ENCODE measurements at regions of chr18 and their contacts with region 1.

Region 1: GRCh38 chr18:35267161-35267651 is 22.8 kb downstream of the ZSCAN30 start:
- DNase-seq: peak; percentile 52 to 67
- ATAC-seq: peak; percentile 87 to 92
- H3K4me3 ChIP-seq: peak overlapping the region; percentile 62 to 89 (median 73)
- H3K27ac ChIP-seq: peak overlapping the region; percentile 78 to 84 (median 82)
- H3K4me1 ChIP-seq: peaks cover 0 to 3% of the 10 kb centered on the region in 2 donors
- H3K27me3 ChIP-seq: no peaks in the 10 kb centered on the region
- CTCF ChIP-seq: peak in 1 of 5 experiments; percentile 5
- POLR2A ChIP-seq: peak; percentile 29 to 37

Region 2: GRCh38 chr18:35240664-35241447 is 26.4 kb before region 1 on chr18 and contains the start of gene ZNF397:
- in situ Hi-C with region 1: no loop called
- intact Hi-C with region 1: loop called (anchors 1 kb)
- DNase-seq: peak; percentile 96 to 97
- ATAC-seq: peak; percentile 99
- H3K4me3 ChIP-seq: peak within 1 kb of the TSS; percentile 79 to 95 (median 86)
- H3K27ac ChIP-seq: peak within 1 kb of the TSS; percentile 92 to 100 (median 96)
- H3K4me1 ChIP-seq: peaks cover 10 to 15% of the 10 kb centered on the region in 2 donors
- H3K27me3 ChIP-seq: no peaks in the 10 kb centered on the region
- CTCF ChIP-seq: peak in 1 of 5 experiments; percentile 16
- POLR2A ChIP-seq: peak; percentile 95 to 96
- total RNA-seq, gene ZNF397: 12.3 to 23.4 (median 14.7) TPM

Region 3: GRCh38 chr18:35290073-35290735 is 23.0 kb after region 1 on chr18 and contains the start of gene ZSCAN30:
- in situ Hi-C with region 1: no loop called
- intact Hi-C with region 1: loop called (anchors 1 kb)
- DNase-seq: peak; percentile 88 to 95
- ATAC-seq: peak; percentile 98
- H3K4me3 ChIP-seq: peak within 1 kb of the TSS; percentile 62 to 88 (median 80)
- H3K27ac ChIP-seq: peak within 1 kb of the TSS; percentile 88 to 92 (median 90)
- H3K4me1 ChIP-seq: peaks cover 21 to 30% of the 10 kb centered on the region in 2 donors
- H3K27me3 ChIP-seq: no peaks in the 10 kb centered on the region
- CTCF ChIP-seq: peak in 1 of 5 experiments; percentile 24
- POLR2A ChIP-seq: peak; percentile 51 to 60
- total RNA-seq, gene ZSCAN30: 4.6 to 34.6 (median 8.2) TPM

Region 4: DNA sequence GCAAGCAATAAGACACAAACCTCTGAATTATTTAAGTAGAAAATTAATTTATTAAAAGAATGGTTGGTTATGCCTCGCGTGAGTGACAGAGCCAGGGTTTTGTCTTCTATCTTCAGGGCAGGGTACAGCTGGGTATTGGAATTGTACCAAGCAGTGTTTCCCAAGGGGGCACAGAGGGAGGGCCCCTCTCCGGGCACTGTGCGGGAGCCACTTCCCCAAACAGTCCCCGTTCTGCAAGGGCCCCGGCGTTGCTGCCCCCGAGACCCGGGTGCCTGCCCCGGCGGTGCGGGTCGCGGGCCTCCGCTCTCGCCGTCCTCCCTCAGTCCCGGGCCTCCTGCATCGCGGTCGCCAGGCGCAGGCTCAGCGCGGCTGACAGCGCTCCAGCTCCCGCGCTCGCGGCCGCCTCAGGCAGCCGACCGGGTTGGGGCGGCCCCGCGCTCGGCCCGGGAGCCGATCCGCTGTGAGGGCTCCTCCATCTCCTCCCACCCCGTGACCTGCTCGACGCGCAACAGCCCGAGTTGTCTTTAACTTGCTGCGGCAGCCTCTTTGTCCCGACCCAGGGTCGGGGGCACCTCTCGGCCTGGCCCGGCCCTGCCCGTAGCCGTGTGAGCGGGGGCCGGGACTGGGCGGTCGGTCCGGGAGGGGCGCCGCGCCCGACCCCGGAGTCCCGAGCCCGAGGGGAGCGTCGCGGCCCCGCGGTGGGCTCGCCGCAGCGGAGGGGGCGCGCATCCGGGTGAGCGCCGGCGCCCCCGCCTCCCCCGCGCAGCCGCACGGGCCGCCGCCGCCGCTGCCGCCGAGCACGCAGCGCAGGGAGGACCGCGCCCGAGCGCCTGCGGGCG is 313.7 kb after region 1 on chr18:
- in situ Hi-C with region 1: no loop called
- intact Hi-C with region 1: no loop called
- DNase-seq: peak; percentile 40 to 61
- ATAC-seq: peak; percentile 80
- H3K4me3 ChIP-seq: peak overlapping the region; percentile 63 to 90 (median 82)
- H3K27ac ChIP-seq: peak overlapping the region; percentile 87 to 97 (median 95)
- H3K4me1 ChIP-seq: peaks cover 19 to 24% of the 10 kb centered on the region in 2 donors
- H3K27me3 ChIP-seq: no peaks in the 10 kb centered on the region
- CTCF ChIP-seq: no peak
- POLR2A ChIP-seq: peak; percentile 32 to 41

Measured in gastrocnemius medialis (tissue), 4 donors.